ENCODE measurements at regions of chr3 and their contacts with region 1.

Region 1: GRCh38 chr3:190443257-190443656 is 6.4 kb downstream of the TMEM207 start:
- DNase-seq: no peak
- ATAC-seq: peak; percentile 55; the same call in 1 of the 2 replicates
- H3K4me3 ChIP-seq: no peak overlapping the region
- H3K27ac ChIP-seq: no peak overlapping the region
- H3K4me1 ChIP-seq: no peaks in the 10 kb centered on the region
- H3K27me3 ChIP-seq: no peaks in the 10 kb centered on the region
- CTCF ChIP-seq: peak; percentile 42 to 58 (median 53); a peak in 4 of 6 replicates
- POLR2A ChIP-seq: no peak
- RAD21 ChIP-seq: peak; percentile 63

Region 2: GRCh38 chr3:190424478-190425439 is 18.5 kb before region 1 on chr3:
- CTCF ChIA-PET with region 1: interaction called, 14 read pairs
- POLR2A ChIA-PET with region 1: no interaction called
- RAD21 ChIA-PET with region 1: no interaction called
- intact Hi-C with region 1: no loop called
- DNase-seq: peak; percentile 78
- ATAC-seq: peak; percentile 91
- H3K4me3 ChIP-seq: peak overlapping the region in 1 of 2 experiments; percentile 17; a peak in 2 of 4 replicates
- H3K27ac ChIP-seq: no peak overlapping the region
- H3K4me1 ChIP-seq: peaks cover 0 to 6% of the 10 kb centered on the region in 2 experiments; a peak in 1 of 4 replicates
- H3K27me3 ChIP-seq: no peaks in the 10 kb centered on the region
- CTCF ChIP-seq: peak; percentile 63 to 81 (median 69)
- POLR2A ChIP-seq: no peak
- RAD21 ChIP-seq: peak; percentile 74

Region 3: GRCh38 chr3:190458040-190458439 is 14.8 kb after region 1 on chr3:
- CTCF ChIA-PET with region 1: interaction called, 11 read pairs
- POLR2A ChIA-PET with region 1: no interaction called
- RAD21 ChIA-PET with region 1: no interaction called
- intact Hi-C with region 1: no loop called
- DNase-seq: no peak
- ATAC-seq: no peak
- H3K4me3 ChIP-seq: no peak overlapping the region
- H3K27ac ChIP-seq: no peak overlapping the region
- H3K4me1 ChIP-seq: no peaks in the 10 kb centered on the region
- H3K27me3 ChIP-seq: no peaks in the 10 kb centered on the region
- CTCF ChIP-seq: 0 out of 6 replicates have a peak, but pooled peaks of 1 of the 3 experiments have one; percentile 7
- POLR2A ChIP-seq: no peak
- RAD21 ChIP-seq: peak; percentile 37

Region 4: DNA sequence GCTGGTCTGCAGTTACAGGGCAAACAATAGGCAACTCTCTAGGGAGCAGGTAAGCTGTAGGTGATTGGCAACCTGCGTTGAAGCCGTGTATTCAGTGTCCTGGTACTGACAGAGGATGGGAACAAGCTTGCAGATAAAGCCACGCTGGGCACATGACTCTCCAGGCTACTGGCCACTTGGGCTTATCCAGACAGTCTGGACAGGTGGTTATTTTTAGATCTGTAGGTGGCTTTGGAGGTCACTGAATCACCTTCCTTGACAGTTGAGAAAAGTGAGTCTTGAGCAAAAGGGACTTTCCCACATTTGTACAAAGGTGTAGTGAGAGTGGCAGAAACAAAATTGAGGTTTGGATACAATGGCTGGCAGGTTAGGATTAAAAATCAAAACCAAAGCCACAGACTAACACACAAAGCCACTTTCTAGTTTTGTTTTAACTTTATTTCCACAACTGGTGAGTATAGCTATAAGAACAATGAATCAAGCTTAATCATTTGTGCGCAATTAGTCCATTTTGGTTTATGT is 48.3 kb after region 1 on chr3:
- CTCF ChIA-PET with region 1: no interaction called
- POLR2A ChIA-PET with region 1: no interaction called
- RAD21 ChIA-PET with region 1: no interaction called
- intact Hi-C with region 1: no loop called
- DNase-seq: no peak
- ATAC-seq: no peak
- H3K4me3 ChIP-seq: no peak overlapping the region
- H3K27ac ChIP-seq: no peak overlapping the region
- H3K4me1 ChIP-seq: peaks cover 0 to 4% of the 10 kb centered on the region in 2 experiments; a peak in 1 of 4 replicates
- H3K27me3 ChIP-seq: no peaks in the 10 kb centered on the region
- CTCF ChIP-seq: no peak
- POLR2A ChIP-seq: no peak
- RAD21 ChIP-seq: no peak

Region 5: GRCh38 chr3:190621927-190622326 is 178.7 kb after region 1 on chr3:
- CTCF ChIA-PET with region 1: no interaction called
- POLR2A ChIA-PET with region 1: no interaction called
- RAD21 ChIA-PET with region 1: no interaction called
- intact Hi-C with region 1: no loop called
- DNase-seq: no peak
- ATAC-seq: no peak
- H3K4me3 ChIP-seq: no peak overlapping the region
- H3K27ac ChIP-seq: no peak overlapping the region
- H3K4me1 ChIP-seq: no peaks in the 10 kb centered on the region
- H3K27me3 ChIP-seq: no peaks in the 10 kb centered on the region
- CTCF ChIP-seq: no peak
- POLR2A ChIP-seq: no peak
- RAD21 ChIP-seq: no peak

Region 6: DNA sequence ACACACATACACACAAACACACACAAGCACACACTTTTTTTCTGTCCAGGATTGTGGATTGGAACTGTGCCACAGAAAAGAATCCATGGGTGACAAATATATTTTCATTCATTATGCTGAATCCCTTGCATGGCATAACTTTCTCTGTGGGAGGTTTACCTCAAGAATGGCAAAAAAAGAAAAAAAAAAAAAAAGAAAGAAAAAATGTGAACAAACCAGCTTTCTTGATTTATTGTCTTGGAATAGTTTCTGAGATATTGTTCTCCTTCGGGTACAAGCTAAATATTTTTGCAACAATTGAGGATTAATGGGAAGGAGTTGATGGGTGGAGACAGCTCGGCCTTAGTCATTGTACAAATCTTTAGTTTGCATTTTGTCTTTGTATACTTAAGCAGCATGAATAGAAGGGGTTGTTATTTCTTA is 266.1 kb after region 1 on chr3:
- CTCF ChIA-PET with region 1: no interaction called
- POLR2A ChIA-PET with region 1: no interaction called
- RAD21 ChIA-PET with region 1: no interaction called
- intact Hi-C with region 1: no loop called
- DNase-seq: no peak
- ATAC-seq: no peak
- H3K4me3 ChIP-seq: no peak overlapping the region
- H3K27ac ChIP-seq: no peak overlapping the region
- H3K4me1 ChIP-seq: no peaks in the 10 kb centered on the region
- H3K27me3 ChIP-seq: no peaks in the 10 kb centered on the region
- CTCF ChIP-seq: no peak
- POLR2A ChIP-seq: no peak
- RAD21 ChIP-seq: no peak